PC-3 (cell line): ENCODE measurements at regions of chr1 and their contacts with region 1.

Region 1: DNA sequence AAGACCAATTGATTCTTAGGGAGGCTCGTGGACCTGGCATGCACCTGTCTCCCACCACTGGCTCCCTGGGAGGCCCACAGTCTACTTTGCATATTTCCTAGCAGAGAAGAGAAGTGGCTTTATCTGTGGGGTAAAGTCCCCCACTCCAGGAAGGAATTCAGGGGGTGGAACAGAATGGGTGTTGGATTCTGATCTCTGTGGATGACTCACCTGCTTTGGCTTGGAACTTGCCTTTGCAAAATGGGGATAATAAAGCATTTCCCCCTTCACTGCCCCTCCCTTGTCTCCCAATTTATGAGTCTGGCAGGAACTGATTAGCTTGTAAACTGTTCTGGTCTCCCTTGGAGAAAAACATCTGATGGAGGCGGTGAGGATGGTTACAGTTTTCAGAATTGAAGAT is 21.2 kb upstream of the OTUD3 start:
- DNase-seq: peak; percentile 83
- ATAC-seq: peak; percentile 76
- H3K4me3 ChIP-seq: no peak overlapping the region
- H3K27ac ChIP-seq: peak overlapping the region; percentile 81
- H3K4me1 ChIP-seq: peaks cover 45% of the 10 kb centered on the region
- H3K27me3 ChIP-seq: no peaks in the 10 kb centered on the region
- CTCF ChIP-seq: no peak

Region 2: DNA sequence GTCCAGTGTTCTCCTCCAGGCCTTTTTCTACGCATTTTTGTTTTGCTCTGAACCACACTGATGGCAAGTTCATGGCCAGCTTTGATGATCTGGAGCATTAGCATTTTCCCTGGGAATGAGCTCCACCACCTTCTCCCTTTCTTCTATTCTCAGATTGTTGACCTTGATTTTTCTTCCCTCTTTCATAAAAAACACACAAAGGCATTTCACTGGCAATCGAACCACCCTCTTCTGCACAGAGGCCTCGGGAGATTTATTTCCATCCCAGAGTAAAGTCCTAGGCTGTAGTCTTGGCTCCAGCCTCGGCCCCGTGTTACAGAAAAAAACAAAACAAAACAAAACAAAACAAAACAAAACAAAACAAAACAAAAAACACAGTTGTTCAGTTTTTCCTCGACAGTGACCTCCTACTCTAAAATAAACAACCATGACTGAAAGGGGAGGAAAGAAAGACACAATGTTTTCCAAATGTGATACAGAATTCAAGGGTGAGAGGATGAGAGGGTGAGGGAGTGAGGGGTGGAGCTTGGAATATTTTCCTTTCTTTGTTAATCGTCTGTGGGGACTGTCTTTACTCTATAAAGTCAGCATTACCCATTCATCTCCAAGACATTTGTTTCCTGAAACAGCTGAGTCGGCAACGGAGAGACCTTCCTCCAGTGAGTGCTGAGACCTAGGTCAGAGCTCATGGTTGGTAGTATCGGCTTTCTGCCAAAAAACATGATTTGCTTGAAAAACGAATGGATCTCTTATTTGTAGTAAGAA is 16.1 kb before region 1 on chr1:
- CTCF ChIA-PET with region 1: no interaction called
- POLR2A ChIA-PET with region 1: interaction called, 3 read pairs
- intact Hi-C with region 1: loop called (anchors 1 kb)
- DNase-seq: no peak
- ATAC-seq: no peak
- H3K4me3 ChIP-seq: no peak overlapping the region
- H3K27ac ChIP-seq: no peak overlapping the region
- H3K4me1 ChIP-seq: peaks cover 11% of the 10 kb centered on the region; the same call in 1 of the 2 replicates
- H3K27me3 ChIP-seq: no peaks in the 10 kb centered on the region
- CTCF ChIP-seq: no peak